ENCODE measurements at regions of chr1 and their contacts with region 1.

Region 1: DNA sequence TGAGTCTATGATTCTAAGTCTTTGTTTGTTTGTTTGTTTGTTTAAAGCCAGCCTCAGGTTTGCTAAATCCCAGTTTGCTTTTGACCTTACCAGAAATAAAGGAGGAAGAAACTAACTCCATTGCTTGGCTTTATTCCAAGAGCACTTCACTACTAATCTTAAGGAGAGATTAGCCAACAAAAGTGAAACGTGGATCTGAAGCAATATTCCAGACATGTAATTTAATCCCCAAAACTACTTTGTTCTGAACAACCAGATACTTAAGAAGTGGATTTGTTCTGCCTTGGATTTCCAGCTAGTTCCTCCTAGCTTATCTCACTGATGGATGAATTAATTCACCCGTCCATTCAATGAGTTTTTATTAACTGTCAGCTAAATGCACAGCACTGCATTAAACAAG is 15.9 kb upstream of the CEP350 start:
- DNase-seq: peak; percentile 20
- ATAC-seq: no peak
- H3K4me3 ChIP-seq: no peak overlapping the region
- H3K27ac ChIP-seq: no peak overlapping the region
- H3K4me1 ChIP-seq: peaks cover 18% of the 10 kb centered on the region
- H3K27me3 ChIP-seq: no peaks in the 10 kb centered on the region
- CTCF ChIP-seq: no peak

Region 2: DNA sequence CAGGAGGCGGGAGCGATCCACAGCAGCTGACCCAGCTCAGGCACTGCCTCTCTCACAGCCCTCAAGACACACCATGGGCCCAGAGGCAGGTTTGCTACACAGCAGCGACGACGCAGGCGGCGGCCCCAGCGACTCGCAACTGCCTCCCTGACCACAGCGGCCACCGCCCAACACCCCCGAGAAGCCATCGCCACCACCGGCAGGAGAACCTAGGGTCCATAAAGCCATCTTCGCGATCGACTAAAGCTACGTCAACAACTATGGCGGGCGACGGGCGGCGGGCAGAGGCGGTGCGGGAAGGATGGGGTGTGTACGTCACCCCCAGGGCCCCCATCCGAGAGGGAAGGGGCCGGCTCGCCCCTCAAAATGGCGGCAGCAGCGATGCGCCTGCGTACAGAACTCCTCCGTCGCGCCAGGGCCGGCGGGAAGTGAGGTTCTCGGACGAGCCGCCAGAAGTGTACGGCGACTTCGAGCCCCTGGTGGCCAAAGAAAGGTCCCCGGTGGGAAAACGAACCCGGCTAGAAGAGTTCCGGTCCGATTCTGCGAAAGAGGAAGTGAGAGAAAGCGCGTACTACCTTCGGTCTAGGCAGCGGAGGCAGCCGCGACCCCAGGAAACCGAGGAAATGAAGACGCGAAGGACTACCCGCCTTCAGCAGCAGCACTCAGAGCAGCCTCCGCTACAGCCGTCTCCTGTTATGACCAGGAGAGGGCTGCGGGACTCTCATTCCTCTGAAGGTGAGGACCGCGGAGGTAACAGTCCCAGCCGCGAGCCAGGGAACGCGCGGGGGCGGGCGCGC is 56.3 kb before region 1 on chr1 and contains the start of gene TOR1AIP1:
- CTCF ChIA-PET with region 1: no interaction called
- POLR2A ChIA-PET with region 1: no interaction called
- intact Hi-C with region 1: loop called (anchors 5 kb)
- DNase-seq: peak; percentile 93
- ATAC-seq: peak; percentile 75
- H3K4me3 ChIP-seq: peak within 1 kb of the TSS; percentile 99
- H3K27ac ChIP-seq: peak within 1 kb of the TSS; percentile 96
- H3K4me1 ChIP-seq: peaks cover 11% of the 10 kb centered on the region; the same call in 1 of the 2 replicates
- H3K27me3 ChIP-seq: no peaks in the 10 kb centered on the region
- CTCF ChIP-seq: no peak
- total RNA-seq, gene TOR1AIP1: 14.8 and 21.3 TPM in 2 replicates

Measured in PC-3 (cell line).